ENCODE measurements at regions of chr6 and their contacts with region 1.

Region 1: GRCh38 chr6:152948150-152948768 is 34.6 kb downstream of the FBXO5 start:
- DNase-seq: no peak
- ATAC-seq: peak; percentile 36
- H3K4me3 Mint-ChIP-seq: no peak overlapping the region
- H3K27ac Mint-ChIP-seq: no peak overlapping the region
- H3K4me1 Mint-ChIP-seq: peaks cover 13% of the 10 kb centered on the region
- H3K27me3 Mint-ChIP-seq: peaks cover 22% of the 10 kb centered on the region

Region 2: GRCh38 chr6:151473286-151473685 is 1475.0 kb before region 1 on chr6:
- CTCF ChIA-PET with region 1: no interaction called
- POLR2A ChIA-PET with region 1: no interaction called
- intact Hi-C with region 1: no loop called
- DNase-seq: no peak
- ATAC-seq: no peak
- H3K4me3 Mint-ChIP-seq: no peak overlapping the region
- H3K27ac Mint-ChIP-seq: no peak overlapping the region
- H3K4me1 Mint-ChIP-seq: no peaks in the 10 kb centered on the region
- H3K27me3 Mint-ChIP-seq: no peaks in the 10 kb centered on the region

Region 3: GRCh38 chr6:152484806-152485205 is 463.5 kb before region 1 on chr6:
- CTCF ChIA-PET with region 1: interaction called, 5 read pairs
- POLR2A ChIA-PET with region 1: no interaction called
- intact Hi-C with region 1: loop called in 1 of 2 experiments (anchors 5 kb)
- DNase-seq: no peak
- ATAC-seq: no peak
- H3K4me3 Mint-ChIP-seq: no peak overlapping the region
- H3K27ac Mint-ChIP-seq: no peak overlapping the region
- H3K4me1 Mint-ChIP-seq: no peaks in the 10 kb centered on the region
- H3K27me3 Mint-ChIP-seq: no peaks in the 10 kb centered on the region

Region 4: GRCh38 chr6:152552616-152553209 is 395.5 kb before region 1 on chr6:
- CTCF ChIA-PET with region 1: interaction called, 8 read pairs
- POLR2A ChIA-PET with region 1: no interaction called
- intact Hi-C with region 1: loop called in 1 of 2 experiments (anchors 1 kb)
- DNase-seq: peak; percentile 55
- ATAC-seq: peak; percentile 57
- H3K4me3 Mint-ChIP-seq: no peak overlapping the region
- H3K27ac Mint-ChIP-seq: no peak overlapping the region
- H3K4me1 Mint-ChIP-seq: no peaks in the 10 kb centered on the region
- H3K27me3 Mint-ChIP-seq: peaks cover 9% of the 10 kb centered on the region

Region 5: DNA sequence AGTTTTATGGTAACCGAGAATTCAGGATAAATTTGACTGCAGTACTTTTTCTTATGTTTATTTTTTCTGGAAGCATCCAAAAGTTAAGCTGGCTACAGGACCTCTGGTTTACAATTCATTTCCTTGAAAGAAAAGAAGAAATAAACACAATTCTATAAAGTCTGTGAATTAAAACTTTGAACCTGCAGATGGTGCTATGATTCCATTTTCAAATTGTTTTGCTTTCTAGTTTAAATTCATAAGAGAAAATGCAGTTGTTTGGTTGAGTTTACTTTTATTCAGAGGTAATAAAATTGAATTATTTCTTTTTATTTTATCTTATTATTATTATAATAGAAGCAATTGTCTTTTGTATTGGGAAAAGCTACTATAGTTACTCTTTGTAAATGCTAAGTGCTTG is 199.4 kb before region 1 on chr6:
- CTCF ChIA-PET with region 1: no interaction called
- POLR2A ChIA-PET with region 1: no interaction called
- intact Hi-C with region 1: loop called in 1 of 2 experiments (anchors 2 kb)
- DNase-seq: no peak
- ATAC-seq: no peak
- H3K4me3 Mint-ChIP-seq: no peak overlapping the region
- H3K27ac Mint-ChIP-seq: no peak overlapping the region
- H3K4me1 Mint-ChIP-seq: no peaks in the 10 kb centered on the region
- H3K27me3 Mint-ChIP-seq: no peaks in the 10 kb centered on the region

Region 6: GRCh38 chr6:152863618-152864326 is 84.5 kb before region 1 on chr6:
- CTCF ChIA-PET with region 1: interaction called, 37 read pairs
- POLR2A ChIA-PET with region 1: no interaction called
- intact Hi-C with region 1: loop called (anchors 1 kb)
- DNase-seq: peak; percentile 80
- ATAC-seq: peak; percentile 72
- H3K4me3 Mint-ChIP-seq: no peak overlapping the region
- H3K27ac Mint-ChIP-seq: no peak overlapping the region
- H3K4me1 Mint-ChIP-seq: no peaks in the 10 kb centered on the region
- H3K27me3 Mint-ChIP-seq: peaks cover 7% of the 10 kb centered on the region

Region 7: DNA sequence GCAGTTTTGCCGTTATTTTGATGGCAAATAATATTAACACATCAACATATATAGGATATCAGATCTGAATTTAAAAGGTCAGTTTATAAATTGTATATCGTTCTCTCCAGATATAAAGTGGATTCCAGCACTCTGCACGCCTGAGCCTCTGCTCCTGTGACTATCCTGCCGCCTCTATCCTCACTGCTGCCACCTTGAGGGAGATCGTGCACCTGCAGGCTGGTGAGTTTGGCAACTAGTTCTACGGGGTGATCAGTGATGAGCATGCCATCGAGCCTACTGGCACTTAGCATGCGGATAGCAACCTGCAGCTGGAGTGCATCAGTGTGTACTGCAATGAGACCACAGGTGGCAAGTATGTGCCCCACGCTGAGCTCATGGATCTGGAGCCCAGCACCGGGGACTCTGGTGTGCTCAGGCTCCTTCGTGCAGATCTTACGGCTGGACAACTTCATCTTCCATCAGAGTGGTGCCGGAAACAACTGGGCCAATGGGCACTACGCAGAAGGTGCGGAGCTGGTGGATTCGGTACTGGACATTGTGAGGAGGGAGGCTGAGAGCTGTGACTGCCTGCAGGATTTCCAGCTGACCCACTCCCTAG is 50.4 kb before region 1 on chr6:
- CTCF ChIA-PET with region 1: interaction called, 7 read pairs
- POLR2A ChIA-PET with region 1: no interaction called
- intact Hi-C with region 1: loop called in 1 of 2 experiments (anchors 2 kb)
- DNase-seq: peak; percentile 83
- ATAC-seq: peak; percentile 92
- H3K4me3 Mint-ChIP-seq: no peak overlapping the region
- H3K27ac Mint-ChIP-seq: no peak overlapping the region
- H3K4me1 Mint-ChIP-seq: no peaks in the 10 kb centered on the region
- H3K27me3 Mint-ChIP-seq: peaks cover 27% of the 10 kb centered on the region

Region 8: DNA sequence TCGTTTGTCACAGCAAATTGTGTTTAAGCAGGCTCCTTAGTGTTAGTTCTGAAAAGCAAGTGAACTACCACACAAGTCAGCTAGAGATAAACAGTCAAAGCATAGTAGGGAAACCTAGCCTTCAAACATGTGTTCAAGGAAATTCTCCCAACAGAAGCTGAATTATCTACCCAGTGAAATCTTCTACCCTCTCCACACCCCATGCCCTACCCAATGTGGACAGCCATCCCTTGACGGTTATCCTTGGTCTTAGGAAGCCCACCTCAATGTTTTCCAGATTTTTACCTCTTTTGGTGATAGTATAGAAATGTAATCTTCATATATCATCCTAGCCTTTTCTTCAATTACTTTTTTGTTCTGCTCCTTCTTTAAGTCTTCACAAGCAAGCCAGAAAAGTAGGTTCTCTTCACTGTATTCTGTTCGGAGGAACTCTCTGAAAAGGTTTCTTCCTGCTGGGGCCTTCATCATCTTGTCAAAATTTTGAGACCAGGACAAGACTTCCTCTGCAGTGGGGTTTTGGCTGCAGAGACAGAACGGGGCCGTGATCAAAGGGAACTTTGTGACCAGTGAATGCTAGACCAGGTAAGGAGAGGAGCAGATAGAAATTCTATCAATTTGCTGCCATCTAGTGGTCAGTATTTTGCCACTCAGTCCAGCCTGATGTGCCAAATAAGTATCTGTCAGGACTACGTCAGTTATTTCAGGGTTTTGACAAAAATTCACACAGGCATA is 75.9 kb after region 1 on chr6:
- CTCF ChIA-PET with region 1: interaction called, 13 read pairs
- POLR2A ChIA-PET with region 1: no interaction called
- intact Hi-C with region 1: loop called (anchors 2 kb)
- DNase-seq: peak; percentile 53
- ATAC-seq: peak; percentile 93
- H3K4me3 Mint-ChIP-seq: no peak overlapping the region
- H3K27ac Mint-ChIP-seq: no peak overlapping the region
- H3K4me1 Mint-ChIP-seq: no peaks in the 10 kb centered on the region
- H3K27me3 Mint-ChIP-seq: peaks cover 19% of the 10 kb centered on the region

Region 9: DNA sequence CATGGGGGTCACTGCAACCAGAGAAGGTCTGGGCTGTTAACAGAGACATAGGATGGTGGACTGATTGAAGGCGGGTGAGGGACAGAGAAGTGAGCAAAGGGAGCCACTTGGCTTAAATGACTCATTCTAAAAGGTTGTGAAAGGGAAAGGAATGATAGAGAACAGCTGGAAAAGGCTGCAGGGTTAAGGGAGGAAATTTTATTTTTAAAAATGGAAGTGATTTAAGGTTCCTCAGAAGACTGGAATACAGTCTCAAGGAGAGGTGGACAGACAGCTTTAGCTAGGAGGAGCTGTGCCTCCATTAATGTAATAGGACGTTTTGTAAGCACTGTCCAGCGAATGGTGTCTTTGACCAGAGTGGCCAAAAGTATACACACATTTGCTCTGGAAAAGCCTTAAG is 136.2 kb after region 1 on chr6:
- CTCF ChIA-PET with region 1: no interaction called
- POLR2A ChIA-PET with region 1: no interaction called
- intact Hi-C with region 1: no loop called
- DNase-seq: no peak
- ATAC-seq: no peak
- H3K4me3 Mint-ChIP-seq: no peak overlapping the region
- H3K27ac Mint-ChIP-seq: no peak overlapping the region
- H3K4me1 Mint-ChIP-seq: peaks cover 4% of the 10 kb centered on the region
- H3K27me3 Mint-ChIP-seq: peaks cover 18% of the 10 kb centered on the region

Region 10: GRCh38 chr6:153123801-153124200 is 175.5 kb after region 1 on chr6:
- CTCF ChIA-PET with region 1: no interaction called
- POLR2A ChIA-PET with region 1: no interaction called
- intact Hi-C with region 1: no loop called
- DNase-seq: no peak
- ATAC-seq: no peak
- H3K4me3 Mint-ChIP-seq: no peak overlapping the region
- H3K27ac Mint-ChIP-seq: no peak overlapping the region
- H3K4me1 Mint-ChIP-seq: no peaks in the 10 kb centered on the region
- H3K27me3 Mint-ChIP-seq: peaks cover 20% of the 10 kb centered on the region

Measured in activated CD4-positive, alpha-beta T cell treated with anti-CD3 and anti-CD28 coated beads for 36 hours (primary cell).